ENCODE measurements at regions of chr7 and their contacts with region 1.

Region 1: DNA sequence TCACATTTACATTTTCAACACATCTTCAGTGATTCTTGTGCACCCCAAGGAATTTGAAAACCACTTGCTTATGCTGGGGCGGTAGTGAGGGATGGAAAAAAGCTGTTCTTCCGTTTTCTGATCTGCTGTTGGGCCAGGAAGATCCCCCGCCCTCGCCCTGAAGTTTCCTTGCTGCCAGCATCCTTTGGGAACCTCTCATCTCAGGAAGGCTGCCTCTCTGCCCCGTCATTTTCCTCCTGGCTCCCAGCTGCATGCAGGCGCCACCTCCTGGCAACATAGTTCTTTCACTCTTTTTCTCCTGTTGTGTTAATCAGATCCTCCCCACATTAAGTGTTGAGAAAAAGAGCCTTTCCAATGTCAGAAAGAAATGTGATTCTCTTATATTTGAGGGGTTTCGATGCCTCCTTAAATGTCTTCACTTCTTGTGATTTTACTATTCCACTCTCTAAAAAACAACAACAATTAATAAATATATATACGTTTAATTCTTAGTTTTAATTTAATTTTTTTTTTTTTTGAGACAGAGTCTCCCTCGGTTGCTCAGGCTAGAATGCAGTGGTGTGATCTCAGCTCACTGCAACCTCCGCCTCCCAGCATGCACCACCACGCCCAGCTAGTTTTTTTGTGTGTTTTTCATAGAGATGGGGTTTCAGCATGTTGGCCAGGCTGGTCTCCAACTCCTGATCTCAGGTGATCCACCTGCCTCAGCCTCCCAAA is 122.9 kb downstream of the RALA start:
- DNase-seq: peak; percentile 73 to 78 (median 77)
- ATAC-seq: peak; percentile 81
- H3K4me3 ChIP-seq: no peak overlapping the region
- H3K27ac ChIP-seq: no peak overlapping the region
- H3K4me1 ChIP-seq: no peaks in the 10 kb centered on the region
- H3K27me3 ChIP-seq: no peaks in the 10 kb centered on the region
- CTCF ChIP-seq: peak; percentile 41 to 85 (median 75)
- POLR2A ChIP-seq: no peak

Region 2: GRCh38 chr7:39042670-39043069 is 703.6 kb before region 1 on chr7:
- intact Hi-C with region 1: no loop called
- DNase-seq: no peak
- ATAC-seq: no peak
- H3K4me3 ChIP-seq: no peak overlapping the region
- H3K27ac ChIP-seq: no peak overlapping the region
- H3K4me1 ChIP-seq: no peaks in the 10 kb centered on the region
- H3K27me3 ChIP-seq: no peaks in the 10 kb centered on the region
- CTCF ChIP-seq: no peak
- POLR2A ChIP-seq: no peak

Region 3: DNA sequence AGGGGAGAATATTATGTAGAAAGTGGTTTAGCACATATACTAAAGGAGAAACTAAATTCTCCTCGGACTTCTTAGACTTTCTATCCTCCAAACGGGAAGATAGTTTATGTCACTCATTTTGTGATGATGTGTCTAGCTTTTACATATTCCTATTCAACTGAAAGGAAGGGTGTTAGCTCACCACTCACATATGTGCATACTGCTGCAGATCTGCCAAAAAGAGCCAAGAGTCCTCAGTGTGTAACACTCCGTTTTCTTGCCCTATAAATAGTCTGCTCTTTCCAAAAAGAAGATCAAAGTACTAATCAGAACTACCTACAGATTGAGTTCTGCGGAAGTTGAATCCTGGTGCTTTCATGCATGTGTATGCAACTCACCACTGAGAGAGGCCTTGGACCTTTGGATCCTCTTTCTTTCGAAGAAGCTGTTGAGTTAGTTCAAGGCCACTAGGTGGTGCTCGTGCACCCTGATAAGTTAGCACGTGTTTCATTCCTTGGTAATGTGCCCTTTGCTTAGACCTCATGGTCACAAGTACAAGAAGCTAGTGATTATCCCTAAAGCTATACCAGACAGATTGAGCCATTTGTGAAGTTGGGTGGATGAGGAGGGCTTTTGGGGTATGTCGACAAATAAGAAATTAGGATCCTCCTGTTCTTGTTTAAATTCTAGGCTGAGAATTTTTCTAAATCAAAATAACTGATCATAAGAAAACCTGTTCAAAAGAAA is 165.9 kb before region 1 on chr7:
- intact Hi-C with region 1: loop called (anchors 5 kb)
- DNase-seq: peak; percentile 85 to 92 (median 88)
- ATAC-seq: peak; percentile 97
- H3K4me3 ChIP-seq: no peak overlapping the region
- H3K27ac ChIP-seq: no peak overlapping the region
- H3K4me1 ChIP-seq: no peaks in the 10 kb centered on the region
- H3K27me3 ChIP-seq: no peaks in the 10 kb centered on the region
- CTCF ChIP-seq: peak; percentile 47 to 96 (median 90)
- POLR2A ChIP-seq: no peak

Measured in body of pancreas (tissue), 4 donors.